Pancreas (tissue), 10 donors: ENCODE measurements at regions of chr16 and their contacts with region 1.

Region 1: GRCh38 chr16:82229796-82230619 is 60.0 kb upstream of the MPHOSPH6 start:
- DNase-seq: peak; percentile 56 to 85 (median 75)
- ATAC-seq: peak; percentile 80 to 91 (median 90)
- H3K4me3 ChIP-seq: no peak overlapping the region
- H3K27ac ChIP-seq: no peak overlapping the region
- H3K4me1 ChIP-seq: no peaks in the 10 kb centered on the region
- H3K27me3 ChIP-seq: no peaks in the 10 kb centered on the region
- CTCF ChIP-seq: peak; percentile 76 to 85 (median 84)

Region 2: DNA sequence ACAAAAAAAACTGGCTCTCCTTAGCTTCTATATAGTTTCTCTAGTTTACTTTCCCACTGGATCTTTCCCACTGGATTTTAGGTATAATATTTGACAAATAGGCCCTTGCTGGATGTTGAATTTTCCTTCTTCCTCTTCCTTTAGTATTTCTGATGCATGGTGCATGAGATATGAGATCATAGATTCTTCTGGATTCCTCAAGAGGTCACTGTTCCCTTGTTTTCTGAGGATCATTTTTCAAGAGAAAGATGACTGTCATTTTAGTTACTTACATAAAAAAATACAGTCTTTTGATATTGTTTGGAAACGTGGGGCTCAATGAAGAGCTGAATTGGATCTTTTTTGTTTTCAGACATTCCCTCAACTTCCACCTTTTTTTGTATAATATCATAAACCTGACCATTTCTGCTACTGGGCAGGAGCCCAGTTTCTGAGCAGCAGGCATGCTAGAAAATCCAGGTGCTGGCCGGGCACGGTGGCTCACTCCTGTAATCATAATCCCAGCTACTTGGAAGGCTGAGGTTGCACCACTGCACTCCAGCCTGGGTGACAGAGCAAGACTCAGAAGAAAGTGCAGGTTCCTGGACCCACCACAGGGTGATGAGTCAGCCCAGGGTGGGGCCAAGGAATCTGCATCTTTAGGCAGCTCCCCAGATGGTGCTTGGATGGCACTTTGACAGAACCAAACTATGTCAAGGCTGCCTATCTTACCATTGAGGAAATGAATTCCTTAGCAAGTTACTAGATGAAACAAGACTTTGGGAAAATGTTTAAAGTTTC is 289.0 kb before region 1 on chr16:
- intact Hi-C with region 1: loop called in 2 of 3 experiments (anchors 5 to 10 kb)
- DNase-seq: peak in 1 of 6 donors; percentile 12
- ATAC-seq: peak in 3 of 4 donors; percentile 78 to 85 (median 83)
- H3K4me3 ChIP-seq: no peak overlapping the region
- H3K27ac ChIP-seq: no peak overlapping the region
- H3K4me1 ChIP-seq: no peaks in the 10 kb centered on the region
- H3K27me3 ChIP-seq: no peaks in the 10 kb centered on the region
- CTCF ChIP-seq: peak in 3 of 4 donors; percentile 39 to 52 (median 50)